K562 (cell line): ENCODE measurements at regions of chr17 and their contacts with region 1.

Region 1: GRCh38 chr17:74852237-74853047 is 7.2 kb downstream of the GRIN2C start:
- DNase-seq: peak; percentile 81 to 95 (median 92)
- ATAC-seq: peak; percentile 93
- H3K4me3 ChIP-seq: 0 out of 2 replicates have a peak overlapping the region, but pooled peaks have one; percentile 12
- H3K27ac ChIP-seq: no peak overlapping the region
- H3K4me1 ChIP-seq: peaks cover 0 to 33% of the 10 kb centered on the region in 2 experiments; a peak in 2 of 5 replicates
- H3K27me3 ChIP-seq: peaks cover 0 to 40% of the 10 kb centered on the region in 2 experiments; a peak in 2 of 5 replicates
- CTCF ChIP-seq: no peak
- EP300 ChIP-seq: no peak
- POLR2A ChIP-seq: no peak; the same call in 1 of the 2 replicates
- RAD21 ChIP-seq: no peak

Region 2: DNA sequence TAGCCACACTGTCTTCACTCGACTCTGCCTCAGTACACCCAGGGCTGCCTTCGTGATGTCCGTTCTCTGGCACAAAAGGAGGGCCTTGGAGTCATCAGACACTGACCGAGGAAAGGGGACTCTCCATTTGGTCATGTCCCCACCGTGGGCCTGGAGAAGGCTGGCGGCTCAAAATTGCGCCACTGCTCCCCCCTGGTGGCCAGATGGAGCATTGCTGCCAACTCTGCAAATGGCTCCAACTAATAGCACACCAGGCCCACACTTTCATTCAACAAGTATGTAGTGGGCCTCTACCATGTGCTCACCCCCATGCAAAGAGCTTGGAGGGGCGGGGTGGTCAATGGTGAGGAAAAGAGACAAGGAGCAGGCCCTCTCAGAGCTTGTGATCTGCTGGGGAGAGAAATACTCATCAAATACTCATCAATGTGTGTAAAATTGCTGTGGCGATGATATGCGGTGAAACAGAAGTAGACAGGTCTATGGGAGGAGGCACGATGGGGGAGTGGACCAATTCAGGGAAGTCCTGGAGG is 12.5 kb after region 1 on chr17:
- CTCF ChIA-PET with region 1: no interaction called
- POLR2A ChIA-PET with region 1: interaction called, 11 read pairs
- in situ Hi-C with region 1: no loop called
- intact Hi-C with region 1: no loop called
- DNase-seq: peak; percentile 57 to 83 (median 70)
- ATAC-seq: peak; percentile 74
- H3K4me3 ChIP-seq: no peak overlapping the region
- H3K27ac ChIP-seq: 0 out of 3 replicates have a peak overlapping the region, but pooled peaks have one; percentile 31
- H3K4me1 ChIP-seq: peaks cover 40 to 85% of the 10 kb centered on the region in 2 experiments
- H3K27me3 ChIP-seq: no peaks in the 10 kb centered on the region
- CTCF ChIP-seq: peak; percentile 90 to 98 (median 90)
- EP300 ChIP-seq: no peak
- POLR2A ChIP-seq: no peak
- RAD21 ChIP-seq: peak; percentile 71 to 85

Region 3: GRCh38 chr17:74873038-74873873 is 20.8 kb after region 1 on chr17:
- CTCF ChIA-PET with region 1: no interaction called
- POLR2A ChIA-PET with region 1: interaction called, 62 read pairs
- in situ Hi-C with region 1: no loop called
- intact Hi-C with region 1: no loop called
- DNase-seq: peak; percentile 94 to 100 (median 98)
- ATAC-seq: peak; percentile 79
- H3K4me3 ChIP-seq: peak overlapping the region; percentile 72
- H3K27ac ChIP-seq: peak overlapping the region; percentile 95
- H3K4me1 ChIP-seq: peaks cover 68 to 69% of the 10 kb centered on the region in 2 experiments
- H3K27me3 ChIP-seq: no peaks in the 10 kb centered on the region
- CTCF ChIP-seq: no peak
- EP300 ChIP-seq: peak; percentile 62
- POLR2A ChIP-seq: peak; percentile 95
- RAD21 ChIP-seq: peak in 1 of 2 experiments; percentile 30; a peak in 2 of 4 replicates

Region 4: GRCh38 chr17:75034236-75034908 is 181.9 kb after region 1 on chr17:
- CTCF ChIA-PET with region 1: no interaction called
- POLR2A ChIA-PET with region 1: no interaction called
- in situ Hi-C with region 1: no loop called
- intact Hi-C with region 1: no loop called
- DNase-seq: peak; percentile 65 to 96 (median 69)
- ATAC-seq: peak; percentile 72
- H3K4me3 ChIP-seq: peak overlapping the region; percentile 69
- H3K27ac ChIP-seq: peak overlapping the region; percentile 96
- H3K4me1 ChIP-seq: peaks cover 31% of the 10 kb centered on the region in 2 experiments
- H3K27me3 ChIP-seq: no peaks in the 10 kb centered on the region
- CTCF ChIP-seq: peak in 2 of 3 experiments; percentile 14 to 41; a peak in 2 of 6 replicates
- EP300 ChIP-seq: peak; percentile 60; the same call in 1 of the 2 replicates
- POLR2A ChIP-seq: peak; percentile 32
- RAD21 ChIP-seq: peak in 1 of 2 experiments; percentile 29; a peak in 2 of 4 replicates

Region 5: GRCh38 chr17:75069783-75070182 is 217.3 kb after region 1 on chr17:
- CTCF ChIA-PET with region 1: no interaction called
- POLR2A ChIA-PET with region 1: no interaction called
- in situ Hi-C with region 1: no loop called
- intact Hi-C with region 1: no loop called
- DNase-seq: no peak
- ATAC-seq: no peak
- H3K4me3 ChIP-seq: no peak overlapping the region
- H3K27ac ChIP-seq: no peak overlapping the region
- H3K4me1 ChIP-seq: peaks cover 30 to 31% of the 10 kb centered on the region in 2 experiments
- H3K27me3 ChIP-seq: no peaks in the 10 kb centered on the region
- CTCF ChIP-seq: peak in 2 of 3 experiments; percentile 21 to 36; a peak in 2 of 6 replicates
- EP300 ChIP-seq: no peak
- POLR2A ChIP-seq: no peak
- RAD21 ChIP-seq: peak; percentile 51 to 56